ENCODE measurements at regions of chr9 and their contacts with region 1.

Region 1: DNA sequence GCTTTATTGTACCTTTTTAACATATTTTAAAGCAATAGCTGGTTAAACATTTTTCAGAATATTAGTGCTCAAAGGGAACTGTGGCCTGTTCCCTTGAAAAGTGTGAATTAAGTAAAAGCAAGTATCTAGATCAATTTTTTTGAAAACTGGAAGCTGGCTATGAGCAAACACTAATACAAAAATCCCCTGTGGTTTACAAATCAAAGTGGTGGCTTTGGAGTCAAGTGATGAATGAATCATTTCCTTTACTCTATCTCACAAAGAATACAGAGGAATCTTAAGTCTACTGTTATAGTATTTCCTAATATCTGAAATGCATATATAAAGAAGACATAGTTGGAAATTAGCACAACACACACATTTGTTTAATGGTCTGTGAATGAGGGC is 212.4 kb upstream of the C9orf72 start:
- DNase-seq: peak; percentile 23
- ATAC-seq: peak; percentile 93
- H3K4me3 ChIP-seq: no peak overlapping the region
- H3K27ac ChIP-seq: no peak overlapping the region
- H3K4me1 ChIP-seq: no peaks in the 10 kb centered on the region
- H3K27me3 ChIP-seq: no peaks in the 10 kb centered on the region
- CTCF ChIP-seq: no peak
- EP300 ChIP-seq: no peak
- POLR2A ChIP-seq: no peak
- RAD21 ChIP-seq: no peak

Region 2: GRCh38 chr9:27799326-27799725 is 13.6 kb after region 1 on chr9:
- CTCF ChIA-PET with region 1: interaction called, 3 read pairs
- POLR2A ChIA-PET with region 1: interaction called, 5 read pairs
- RAD21 ChIA-PET with region 1: interaction called, 5 read pairs
- SMC1A ChIA-PET with region 1: interaction called, 54 read pairs
- in situ Hi-C with region 1: no loop called
- intact Hi-C with region 1: no loop called
- DNase-seq: no peak
- ATAC-seq: peak; percentile 28; the same call in 1 of the 3 replicates
- H3K4me3 ChIP-seq: no peak overlapping the region
- H3K27ac ChIP-seq: no peak overlapping the region
- H3K4me1 ChIP-seq: no peaks in the 10 kb centered on the region
- H3K27me3 ChIP-seq: no peaks in the 10 kb centered on the region
- CTCF ChIP-seq: no peak
- EP300 ChIP-seq: no peak
- POLR2A ChIP-seq: no peak
- RAD21 ChIP-seq: no peak

Measured in GM12878 (cell line).